ENCODE measurements at regions of chr5 and their contacts with region 1.

Region 1: DNA sequence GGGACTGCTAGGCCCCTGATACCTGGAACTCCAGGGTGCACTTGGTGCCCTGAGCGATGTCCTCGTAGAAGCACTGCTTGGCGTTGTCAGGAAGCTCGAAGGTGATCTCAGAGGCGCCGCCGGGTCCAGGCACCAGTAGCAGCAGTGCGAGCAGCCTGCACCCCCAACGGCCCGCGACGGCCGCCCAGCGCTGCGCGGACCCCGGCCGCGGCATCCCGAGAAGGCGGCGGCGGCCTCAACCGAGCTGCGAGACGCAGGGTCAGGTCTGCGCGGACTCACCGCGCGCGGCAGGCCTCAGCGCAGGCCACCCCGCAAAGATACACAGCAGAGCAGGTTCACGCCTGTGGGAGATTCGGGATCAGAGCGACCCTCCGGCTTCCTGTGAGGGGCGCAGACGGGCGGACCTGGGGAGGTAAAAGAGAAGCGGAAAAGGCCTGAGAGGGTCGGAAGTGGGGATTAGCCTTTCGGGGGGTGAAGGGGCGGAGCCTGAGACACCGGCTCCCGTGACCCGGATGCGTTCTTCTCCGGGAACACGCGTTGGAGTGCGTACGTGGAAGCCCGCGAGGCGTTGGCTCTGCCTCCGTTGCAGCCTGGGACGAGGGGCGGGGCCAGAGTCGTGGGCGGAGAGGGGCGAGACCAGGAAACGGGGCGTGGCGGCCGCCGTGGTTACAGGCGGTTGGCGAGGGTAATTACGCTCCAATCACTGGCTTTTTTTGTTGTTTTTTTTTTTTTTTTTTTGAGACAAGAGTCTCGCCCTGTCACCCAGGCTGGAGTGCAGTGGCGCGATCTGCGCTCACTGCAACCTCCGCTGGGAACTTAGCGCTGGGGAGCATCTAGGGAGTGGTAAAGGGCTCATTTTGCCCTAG is at the start of gene TMED7:
- DNase-seq: peak; percentile 99 to 100 (median 99)

Region 2: DNA sequence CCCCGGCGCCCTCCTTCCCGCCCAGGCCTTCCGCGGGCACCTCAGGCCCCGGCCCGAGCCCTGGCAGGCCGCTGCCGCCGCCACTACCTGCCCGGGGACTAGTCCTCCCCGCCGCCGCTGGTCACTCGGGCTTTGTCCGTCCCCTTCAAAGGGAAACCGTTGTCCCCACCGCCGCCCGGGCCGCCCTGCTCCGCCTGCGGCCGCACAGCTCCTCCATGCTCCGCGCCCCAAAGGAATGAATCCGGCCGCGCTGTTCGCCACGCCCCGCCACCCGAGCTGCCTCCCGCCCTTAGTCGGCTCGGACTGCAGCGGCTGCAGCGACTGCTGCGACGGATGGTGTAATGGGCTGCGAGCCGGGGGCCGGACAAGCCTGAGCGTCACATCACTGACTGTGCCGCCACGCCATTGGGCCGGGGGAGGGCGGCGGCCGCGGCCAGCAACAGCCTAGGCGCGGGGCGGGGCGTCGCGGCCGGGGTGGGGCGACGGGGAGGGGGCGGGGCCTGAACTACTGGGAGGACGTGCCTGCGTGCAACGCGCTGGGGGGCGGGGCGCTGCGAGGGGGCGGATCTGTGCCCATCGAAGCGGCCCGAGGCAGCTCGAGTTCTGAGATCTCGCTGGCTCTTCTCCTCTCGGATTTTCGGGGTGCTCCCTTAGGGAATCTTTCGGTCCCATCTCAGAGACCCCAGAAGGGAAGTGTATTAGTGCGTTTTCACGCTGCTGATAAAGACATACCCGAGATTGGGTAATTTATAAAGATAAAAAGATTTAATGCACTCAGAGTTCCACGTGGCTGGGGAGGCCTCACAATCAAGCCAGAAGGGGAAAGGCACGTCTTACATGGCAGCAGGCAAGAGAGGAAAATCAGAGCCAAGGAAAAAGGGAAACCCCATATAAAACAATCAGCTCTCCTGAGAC is 81.1 kb before region 1 on chr5 and contains the start of gene FEM1C:
- intact Hi-C with region 1: loop called (anchors 10 kb)
- DNase-seq: peak; percentile 94 to 100 (median 96)

Region 3: DNA sequence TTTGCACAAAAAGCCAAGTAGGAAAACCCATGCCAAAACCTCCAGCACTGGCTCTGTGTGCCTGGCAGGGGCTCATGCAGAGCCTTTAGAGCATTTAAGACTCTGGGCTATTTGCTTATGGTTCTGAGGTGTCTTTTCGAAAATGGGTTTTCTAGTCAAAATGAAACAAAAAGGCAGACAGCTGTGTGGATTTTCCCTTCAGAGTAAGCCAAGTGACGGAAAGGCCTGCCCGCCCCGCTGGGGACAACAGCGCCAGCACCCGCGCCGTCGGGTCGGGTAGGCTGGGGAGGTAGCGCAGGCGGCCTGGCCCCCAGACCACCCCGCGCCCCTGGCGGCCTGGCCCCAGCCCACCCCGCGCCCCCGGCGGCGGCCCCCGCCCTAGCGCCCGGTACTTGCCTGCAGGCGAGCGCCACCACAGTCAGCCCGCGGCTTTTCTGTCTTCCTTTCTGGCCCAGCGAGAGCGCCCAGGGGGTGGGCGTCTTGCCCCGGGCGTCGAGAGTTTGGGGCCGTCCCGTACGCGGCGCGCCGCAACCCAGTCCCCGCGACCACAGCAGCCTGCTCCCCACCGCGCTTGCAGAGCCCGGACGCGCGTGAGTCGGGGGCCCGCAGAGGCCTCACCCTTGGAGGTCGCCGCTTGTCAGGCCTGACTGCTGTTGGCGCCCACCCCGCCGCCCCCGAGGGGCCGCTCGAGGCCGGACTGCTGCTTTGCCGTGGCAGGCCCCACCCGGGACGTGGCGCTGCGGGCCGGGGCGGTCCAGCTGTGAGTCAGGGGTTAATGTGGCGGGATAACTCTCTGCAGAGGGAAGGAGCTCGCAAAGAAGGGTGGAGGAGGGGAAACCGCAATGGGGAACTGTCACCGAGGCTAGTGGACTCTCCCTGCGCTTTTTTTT is 23.9 kb before region 1 on chr5 and contains the start of gene TICAM2:
- intact Hi-C with region 1: loop called (anchors 2 kb)
- DNase-seq: peak; percentile 54 to 96 (median 68)

Region 4: DNA sequence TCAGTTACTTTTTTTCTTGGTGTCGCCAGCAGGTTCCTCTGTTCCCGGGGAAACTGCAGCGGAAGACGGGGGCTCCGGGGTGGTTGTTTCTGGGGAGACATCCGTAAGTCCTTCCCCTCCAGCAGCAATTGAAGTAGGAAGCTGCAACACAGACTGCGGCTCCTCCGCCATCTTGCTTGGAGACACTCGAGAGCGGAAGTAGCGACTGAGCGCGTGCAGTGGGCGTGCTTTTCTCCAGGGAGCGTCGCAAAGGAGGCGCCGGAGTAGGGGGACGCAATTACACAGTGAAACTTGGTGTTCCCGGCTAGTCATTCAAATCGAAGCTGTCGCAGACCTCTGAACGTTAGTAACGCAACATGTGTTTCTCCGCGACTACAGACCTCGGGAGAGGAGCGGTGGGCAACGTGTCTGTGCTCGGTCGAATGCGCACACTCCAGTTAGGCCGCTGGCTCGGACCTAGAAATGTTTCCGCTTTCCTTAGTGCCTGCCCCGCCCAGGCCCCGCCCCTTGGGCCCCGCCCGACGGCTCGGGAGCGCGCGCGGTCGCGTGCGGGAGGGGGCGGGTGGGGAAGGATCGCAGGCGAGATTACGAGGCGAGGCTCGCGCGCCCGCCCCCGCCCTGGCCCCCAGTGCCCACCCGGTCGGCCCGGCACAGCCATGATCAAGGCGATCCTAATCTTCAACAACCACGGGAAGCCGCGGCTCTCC is 215.7 kb after region 1 on chr5 and contains the starts of genes AP3S1 and ATG12:
- intact Hi-C with region 1: loop called (anchors 1 kb)
- DNase-seq: peak; percentile 85 to 98 (median 91)